ENCODE measurements at regions of chr14 and their contacts with region 1.

Region 1: GRCh38 chr14:76050797-76051392 is 65.3 kb downstream of the IFT43 start:
- DNase-seq: peak in 1 of 2 donors; percentile 52
- H3K4me3 ChIP-seq: no peak overlapping the region
- CTCF ChIP-seq: no peak
- POLR2A ChIP-seq: no peak

Region 2: DNA sequence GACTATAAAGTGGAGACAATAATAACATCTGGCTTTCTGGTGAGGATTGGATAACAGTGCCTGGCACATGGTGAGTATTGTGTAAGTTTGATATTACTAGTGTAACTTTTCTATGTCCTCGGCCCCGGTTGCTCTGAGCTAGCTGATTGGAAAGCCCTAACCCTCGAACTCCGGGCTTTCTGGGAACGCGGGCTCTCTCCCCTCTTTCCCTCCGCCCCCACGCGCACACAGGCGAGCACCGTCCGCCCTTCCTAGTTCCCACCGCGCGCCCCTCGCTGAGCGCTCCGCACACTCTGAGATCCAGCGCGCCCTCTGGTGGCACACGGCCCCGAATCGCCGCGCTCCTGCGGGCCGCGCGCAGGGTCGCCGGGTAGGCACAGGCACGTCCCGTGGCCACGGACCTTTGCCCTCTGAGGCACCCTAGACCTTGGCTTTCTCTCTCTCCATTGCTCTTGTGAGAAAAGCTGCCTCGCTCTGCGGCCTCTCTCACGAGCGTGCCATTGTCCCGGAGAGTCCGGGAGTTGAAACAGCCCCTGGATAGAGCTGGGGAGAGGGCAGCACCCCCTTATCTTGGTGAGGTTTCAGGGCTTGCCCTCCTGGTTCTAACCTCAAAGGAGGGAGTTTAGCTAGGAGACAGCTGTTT is 301.9 kb after region 1 on chr14:
- intact Hi-C with region 1: loop called (anchors 10 kb)
- DNase-seq: peak in 1 of 2 donors; percentile 14
- H3K4me3 ChIP-seq: no peak overlapping the region
- CTCF ChIP-seq: peak in 1 of 3 donors; percentile 48
- POLR2A ChIP-seq: no peak